GM12878 (cell line): ENCODE measurements at regions of chr16 and their contacts with region 1.

Region 1: DNA sequence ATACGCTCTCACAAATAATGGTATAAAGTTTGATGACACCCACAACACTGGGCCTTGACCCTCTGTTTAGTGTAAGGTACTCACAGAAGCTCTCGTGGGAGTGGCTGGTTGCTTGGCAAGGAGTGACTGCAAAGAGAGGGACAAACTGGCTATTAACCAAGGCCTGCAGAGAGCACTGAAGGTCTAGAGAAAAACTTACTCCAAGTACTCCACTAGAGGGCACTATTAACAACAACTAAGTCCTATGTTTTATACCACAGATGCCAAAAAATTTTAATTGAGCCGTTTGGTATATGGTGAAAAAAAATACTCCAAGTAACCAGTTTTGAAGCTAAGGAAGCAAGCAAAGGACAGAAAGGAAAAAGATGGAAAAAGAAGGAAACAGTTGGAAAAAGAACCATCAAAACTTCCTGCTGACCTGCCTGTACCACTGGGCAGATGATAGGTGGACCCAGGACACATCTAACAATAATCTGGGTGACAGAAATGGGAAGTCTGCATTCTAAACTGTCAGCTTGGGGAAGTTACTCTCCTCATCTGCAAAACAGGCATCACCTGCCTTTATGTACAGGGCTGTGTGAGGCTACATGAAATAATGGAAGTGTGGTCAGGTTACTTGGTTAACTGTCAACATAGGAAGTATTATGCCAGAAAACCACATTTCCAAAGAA is 23.2 kb downstream of the DYNC1LI2 start:
- DNase-seq: no peak
- ATAC-seq: peak; percentile 97
- H3K4me3 ChIP-seq: no peak overlapping the region
- H3K27ac ChIP-seq: no peak overlapping the region
- H3K4me1 ChIP-seq: no peaks in the 10 kb centered on the region
- H3K27me3 ChIP-seq: no peaks in the 10 kb centered on the region
- CTCF ChIP-seq: peak; percentile 37 to 63 (median 59); a peak in 5 of 6 replicates
- EP300 ChIP-seq: no peak
- POLR2A ChIP-seq: no peak
- RAD21 ChIP-seq: peak; percentile 47

Region 2: GRCh38 chr16:66590322-66590721 is 137.9 kb before region 1 on chr16:
- CTCF ChIA-PET with region 1: no interaction called
- POLR2A ChIA-PET with region 1: no interaction called
- RAD21 ChIA-PET with region 1: no interaction called
- SMC1A ChIA-PET with region 1: no interaction called
- in situ Hi-C with region 1: no loop called
- intact Hi-C with region 1: no loop called
- DNase-seq: no peak
- ATAC-seq: peak; percentile 70
- H3K4me3 ChIP-seq: peak overlapping the region; percentile 43; the same call in 1 of the 2 replicates
- H3K27ac ChIP-seq: no peak overlapping the region
- H3K4me1 ChIP-seq: peaks cover 4% of the 10 kb centered on the region
- H3K27me3 ChIP-seq: peaks cover 0 to 4% of the 10 kb centered on the region in 2 experiments; a peak in 1 of 4 replicates
- CTCF ChIP-seq: no peak
- EP300 ChIP-seq: no peak
- POLR2A ChIP-seq: no peak
- RAD21 ChIP-seq: no peak

Region 3: DNA sequence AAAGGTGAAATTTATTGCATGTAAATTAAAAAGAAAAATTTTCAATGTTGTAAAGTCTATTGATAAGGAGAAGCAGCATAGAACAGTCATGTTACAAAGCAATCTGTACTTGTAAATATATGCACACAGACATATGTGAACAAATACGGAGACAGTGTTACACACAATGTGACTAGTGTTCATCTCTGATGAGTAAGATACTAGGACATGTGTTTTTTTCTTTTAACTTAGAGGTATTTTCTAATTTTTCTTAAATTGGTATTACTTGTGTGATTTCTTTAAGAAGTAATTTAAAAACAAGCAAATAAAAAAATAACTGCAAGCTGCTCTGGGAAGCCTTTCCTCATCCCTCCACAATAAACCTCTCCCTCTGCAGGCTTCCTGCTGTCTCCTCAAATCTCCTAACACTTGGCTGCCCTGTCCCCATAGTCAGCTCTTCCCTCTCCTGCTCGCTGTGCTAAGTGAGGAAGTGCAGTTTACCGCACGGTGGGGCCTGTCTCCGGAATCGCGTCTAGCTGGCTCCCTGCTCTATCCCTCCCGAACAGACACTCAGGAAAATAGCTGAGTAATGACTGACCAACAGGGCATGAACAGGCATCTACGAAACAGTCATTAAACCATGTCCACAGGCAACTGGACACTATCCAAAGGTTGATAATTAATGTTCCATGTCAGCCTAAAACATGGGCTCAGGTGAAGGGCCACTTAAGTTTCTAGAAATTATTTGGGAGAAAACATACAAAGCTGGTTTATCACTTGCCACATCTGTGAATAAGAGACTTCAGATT is 67.6 kb before region 1 on chr16:
- CTCF ChIA-PET with region 1: interaction called, 3 read pairs
- POLR2A ChIA-PET with region 1: interaction called, 10 read pairs
- RAD21 ChIA-PET with region 1: no interaction called
- SMC1A ChIA-PET with region 1: no interaction called
- in situ Hi-C with region 1: no loop called
- intact Hi-C with region 1: no loop called
- DNase-seq: no peak
- ATAC-seq: peak; percentile 27; the same call in 1 of the 3 replicates
- H3K4me3 ChIP-seq: no peak overlapping the region
- H3K27ac ChIP-seq: no peak overlapping the region
- H3K4me1 ChIP-seq: no peaks in the 10 kb centered on the region
- H3K27me3 ChIP-seq: 0 out of 4 replicates have a peak, but pooled peaks cover 0 to 2% of the 10 kb centered on the region in 2 experiments
- CTCF ChIP-seq: no peak
- EP300 ChIP-seq: no peak
- POLR2A ChIP-seq: no peak
- RAD21 ChIP-seq: no peak

Region 4: DNA sequence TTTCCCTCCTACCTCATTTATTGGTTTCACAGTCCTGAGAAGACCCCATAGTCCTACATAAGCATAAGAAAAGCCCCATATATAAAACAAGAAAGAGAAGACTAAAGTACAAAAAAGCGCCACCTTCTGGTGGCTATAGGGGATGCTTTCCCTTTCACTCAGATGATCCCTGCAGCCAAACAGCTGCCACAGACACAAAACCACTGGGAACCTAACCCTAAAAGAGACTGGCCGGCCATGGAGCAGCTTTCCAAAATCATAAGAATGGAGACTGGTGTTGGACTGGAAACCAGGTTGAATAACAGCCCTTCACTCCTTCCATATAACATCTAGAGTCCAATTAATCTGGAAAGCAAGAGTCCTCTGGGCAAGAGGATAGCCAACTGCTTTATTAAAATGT is 11.8 kb after region 1 on chr16:
- CTCF ChIA-PET with region 1: interaction called, 76 read pairs
- POLR2A ChIA-PET with region 1: interaction called, 4 read pairs
- RAD21 ChIA-PET with region 1: interaction called, 3 read pairs
- SMC1A ChIA-PET with region 1: interaction called, 4 read pairs
- in situ Hi-C with region 1: no loop called
- intact Hi-C with region 1: no loop called
- DNase-seq: no peak
- ATAC-seq: peak; percentile 89
- H3K4me3 ChIP-seq: no peak overlapping the region
- H3K27ac ChIP-seq: no peak overlapping the region
- H3K4me1 ChIP-seq: no peaks in the 10 kb centered on the region
- H3K27me3 ChIP-seq: no peaks in the 10 kb centered on the region
- CTCF ChIP-seq: peak; percentile 47 to 56 (median 49)
- EP300 ChIP-seq: no peak
- POLR2A ChIP-seq: no peak
- RAD21 ChIP-seq: peak; percentile 32; the same call in 1 of the 2 replicates

Region 5: GRCh38 chr16:66751303-66751991 is 23.2 kb after region 1 on chr16 and contains the start of gene DYNC1LI2:
- CTCF ChIA-PET with region 1: interaction called, 14 read pairs
- POLR2A ChIA-PET with region 1: no interaction called
- RAD21 ChIA-PET with region 1: no interaction called
- SMC1A ChIA-PET with region 1: interaction called, 5 read pairs
- in situ Hi-C with region 1: no loop called
- intact Hi-C with region 1: no loop called
- DNase-seq: no peak
- ATAC-seq: peak; percentile 79
- H3K4me3 ChIP-seq: peak within 1 kb of the TSS; percentile 84
- H3K27ac ChIP-seq: peak within 1 kb of the TSS; percentile 92
- H3K4me1 ChIP-seq: peaks cover 7% of the 10 kb centered on the region
- H3K27me3 ChIP-seq: peaks cover 0 to 3% of the 10 kb centered on the region in 2 experiments; a peak in 1 of 4 replicates
- CTCF ChIP-seq: peak; percentile 70 to 92 (median 72); a peak in 4 of 6 replicates
- EP300 ChIP-seq: no peak
- POLR2A ChIP-seq: peak; percentile 86
- RAD21 ChIP-seq: no peak
- polyA plus RNA-seq, gene DYNC1LI2: 6.0 to 8.3 TPM

Region 6: GRCh38 chr16:66758086-66758485 is 29.8 kb after region 1 on chr16:
- CTCF ChIA-PET with region 1: interaction called, 14 read pairs
- POLR2A ChIA-PET with region 1: no interaction called
- RAD21 ChIA-PET with region 1: no interaction called
- SMC1A ChIA-PET with region 1: interaction called, 5 read pairs
- in situ Hi-C with region 1: no loop called
- intact Hi-C with region 1: no loop called
- DNase-seq: no peak
- ATAC-seq: no peak
- H3K4me3 ChIP-seq: no peak overlapping the region
- H3K27ac ChIP-seq: no peak overlapping the region
- H3K4me1 ChIP-seq: no peaks in the 10 kb centered on the region
- H3K27me3 ChIP-seq: peaks cover 0 to 3% of the 10 kb centered on the region in 2 experiments; a peak in 1 of 4 replicates
- CTCF ChIP-seq: peak in 1 of 3 experiments; percentile 20; a peak in 1 of 6 replicates
- EP300 ChIP-seq: no peak
- POLR2A ChIP-seq: no peak
- RAD21 ChIP-seq: no peak

Region 7: GRCh38 chr16:66830422-66831404 is 102.5 kb after region 1 on chr16 and contains the start of gene NAE1:
- CTCF ChIA-PET with region 1: interaction called, 11 read pairs
- POLR2A ChIA-PET with region 1: no interaction called
- RAD21 ChIA-PET with region 1: interaction called, 3 read pairs
- SMC1A ChIA-PET with region 1: interaction called, 3 read pairs
- in situ Hi-C with region 1: no loop called
- intact Hi-C with region 1: no loop called
- DNase-seq: peak; percentile 57
- ATAC-seq: peak; percentile 95
- H3K4me3 ChIP-seq: peak within 1 kb of the TSS; percentile 96
- H3K27ac ChIP-seq: peak within 1 kb of the TSS; percentile 70
- H3K4me1 ChIP-seq: peaks cover 9% of the 10 kb centered on the region
- H3K27me3 ChIP-seq: no peaks in the 10 kb centered on the region
- CTCF ChIP-seq: peak; percentile 93 to 99 (median 99); a peak in 5 of 6 replicates
- EP300 ChIP-seq: no peak
- POLR2A ChIP-seq: peak; percentile 97
- RAD21 ChIP-seq: peak; percentile 52
- polyA plus RNA-seq, gene NAE1: 76.6 to 101 TPM